ENCODE measurements at regions of chr13 and their contacts with region 1.

Region 1: DNA sequence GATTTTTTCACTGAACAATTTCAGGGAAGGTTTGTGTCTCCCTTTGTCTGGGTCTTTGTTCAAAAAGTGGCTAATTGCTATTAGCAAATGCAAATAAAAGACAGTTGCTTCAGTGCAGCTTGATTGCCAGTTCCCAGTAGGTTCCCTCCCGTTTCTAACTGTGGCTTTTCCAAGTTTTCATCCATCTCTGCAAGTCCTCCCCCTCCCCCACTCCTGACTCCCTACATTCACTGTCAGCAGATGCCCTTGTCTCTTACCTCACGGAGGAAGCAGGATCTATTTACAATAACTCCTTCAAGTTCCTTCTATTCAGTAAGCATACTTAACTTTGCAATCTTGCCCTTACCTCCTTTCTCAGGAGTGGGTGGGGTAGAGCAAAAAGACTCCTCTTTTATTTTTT is 55.4 kb upstream of the SCEL start:
- DNase-seq: no peak
- H3K4me3 ChIP-seq: no peak overlapping the region
- H3K27ac ChIP-seq: no peak overlapping the region
- H3K4me1 ChIP-seq: peaks cover 8% of the 10 kb centered on the region
- CTCF ChIP-seq: no peak

Region 2: GRCh38 chr13:77026818-77027585 is 453.1 kb before region 1 on chr13 and contains the start of gene FBXL3:
- CTCF ChIA-PET with region 1: no interaction called
- POLR2A ChIA-PET with region 1: interaction called, 6 read pairs
- intact Hi-C with region 1: loop called (anchors 1 kb)
- DNase-seq: peak; percentile 91
- H3K4me3 ChIP-seq: peak within 1 kb of the TSS; percentile 98
- H3K27ac ChIP-seq: peak within 1 kb of the TSS; percentile 91
- H3K4me1 ChIP-seq: peaks cover 36% of the 10 kb centered on the region
- CTCF ChIP-seq: no peak
- total RNA-seq, gene FBXL3: 21.6 and 23.4 TPM in 2 replicates

Region 3: GRCh38 chr13:77274126-77274525 is 205.9 kb before region 1 on chr13:
- CTCF ChIA-PET with region 1: no interaction called
- POLR2A ChIA-PET with region 1: interaction called, 8 read pairs
- intact Hi-C with region 1: loop called (anchors 5 kb)
- DNase-seq: no peak
- H3K4me3 ChIP-seq: no peak overlapping the region
- H3K27ac ChIP-seq: no peak overlapping the region
- H3K4me1 ChIP-seq: no peaks in the 10 kb centered on the region
- CTCF ChIP-seq: peak; percentile 61

Region 4: DNA sequence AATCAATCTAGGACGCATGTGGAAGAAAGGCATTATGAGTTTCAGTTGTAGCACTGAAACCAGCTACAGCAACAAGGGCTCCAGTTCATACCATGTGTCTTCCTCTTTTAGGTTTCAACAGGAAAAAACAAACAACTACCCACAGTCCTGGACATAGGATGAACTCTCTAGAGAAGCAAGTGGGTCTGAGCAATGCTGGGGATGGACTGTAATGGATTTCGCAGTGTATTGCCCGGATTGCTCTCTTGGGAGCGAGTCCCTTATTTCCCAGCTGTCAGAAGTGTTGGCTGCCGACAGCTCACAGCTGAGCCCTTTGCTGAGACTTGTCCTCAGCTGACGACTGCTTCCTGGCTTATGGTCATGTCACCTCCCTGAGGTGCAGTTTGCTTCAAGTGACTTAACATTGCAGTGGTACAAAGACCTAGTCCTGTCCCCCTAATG is 141.1 kb before region 1 on chr13:
- CTCF ChIA-PET with region 1: interaction called, 4 read pairs
- POLR2A ChIA-PET with region 1: interaction called, 5 read pairs
- intact Hi-C with region 1: loop called (anchors 1 kb)
- DNase-seq: peak; percentile 73
- H3K4me3 ChIP-seq: peak overlapping the region; percentile 60
- H3K27ac ChIP-seq: peak overlapping the region; percentile 92
- H3K4me1 ChIP-seq: peaks cover 50% of the 10 kb centered on the region
- CTCF ChIP-seq: no peak

Region 5: DNA sequence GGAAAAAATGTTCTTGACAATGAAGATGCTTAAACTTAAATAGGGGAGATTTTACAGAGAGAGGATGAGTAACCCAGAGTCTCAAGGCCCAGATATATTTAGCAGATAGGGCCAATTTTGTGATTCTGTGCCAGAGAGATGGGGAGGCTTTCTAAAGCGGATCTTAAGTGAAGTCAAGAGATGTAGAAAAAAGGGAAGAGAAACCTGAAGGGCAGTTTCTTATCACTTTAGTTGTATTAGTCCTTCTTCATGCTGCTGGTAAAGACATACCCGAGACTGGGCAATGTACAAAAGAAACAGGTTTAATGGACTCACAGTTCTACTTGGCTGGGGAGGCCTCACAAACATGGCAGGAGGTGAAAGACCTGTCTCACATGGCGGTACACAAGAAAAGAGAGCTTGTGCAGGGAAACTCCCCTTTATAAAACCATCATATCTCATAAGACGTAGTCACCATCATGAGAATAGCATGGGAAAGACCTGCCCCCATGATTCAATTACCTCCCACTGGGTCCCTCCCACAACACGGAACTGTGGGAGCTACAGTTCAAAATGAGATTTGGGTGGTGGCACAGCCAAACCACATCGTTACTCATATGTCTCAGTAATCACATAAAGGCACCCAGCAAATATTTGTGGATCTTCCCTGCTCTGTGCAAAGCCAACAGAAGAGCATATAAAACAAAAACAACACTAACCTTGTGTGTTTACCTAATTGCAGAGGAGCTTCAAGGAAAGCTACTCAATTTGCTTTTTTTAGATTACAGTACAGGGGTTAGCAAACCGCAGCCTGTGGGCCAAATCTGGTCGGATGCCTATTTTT is 50.5 kb before region 1 on chr13:
- CTCF ChIA-PET with region 1: no interaction called
- POLR2A ChIA-PET with region 1: interaction called, 8 read pairs
- intact Hi-C with region 1: loop called (anchors 1 kb)
- DNase-seq: peak; percentile 82
- H3K4me3 ChIP-seq: peak overlapping the region; percentile 36
- H3K27ac ChIP-seq: peak overlapping the region; percentile 71
- H3K4me1 ChIP-seq: peaks cover 18% of the 10 kb centered on the region
- CTCF ChIP-seq: no peak

Region 6: DNA sequence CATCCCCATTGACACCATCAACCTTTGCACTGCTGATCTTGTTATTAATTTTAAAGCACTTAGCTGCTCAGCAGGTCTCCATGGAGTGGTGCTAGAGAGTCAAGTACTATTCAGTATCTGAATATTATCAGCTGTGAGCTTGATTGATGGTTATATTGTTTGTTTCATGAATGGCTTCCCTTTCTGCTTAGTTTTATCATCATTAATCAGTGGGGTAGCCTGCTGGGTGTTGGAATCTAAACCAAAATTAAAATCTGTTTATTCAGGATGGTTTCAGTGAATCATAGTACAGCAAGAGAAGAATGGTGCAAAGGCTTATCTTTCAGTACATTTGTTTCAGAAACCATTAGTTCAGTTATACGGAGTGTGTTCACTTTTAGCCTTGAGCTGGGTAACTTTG is 12.9 kb after region 1 on chr13:
- CTCF ChIA-PET with region 1: no interaction called
- POLR2A ChIA-PET with region 1: interaction called, 11 read pairs
- intact Hi-C with region 1: no loop called
- DNase-seq: peak; percentile 30
- H3K4me3 ChIP-seq: no peak overlapping the region
- H3K27ac ChIP-seq: no peak overlapping the region
- H3K4me1 ChIP-seq: no peaks in the 10 kb centered on the region
- CTCF ChIP-seq: peak; percentile 75

Measured in OCI-LY7 (cell line).